ENCODE measurements at regions of chr10 and their contacts with region 1.

Region 1: DNA sequence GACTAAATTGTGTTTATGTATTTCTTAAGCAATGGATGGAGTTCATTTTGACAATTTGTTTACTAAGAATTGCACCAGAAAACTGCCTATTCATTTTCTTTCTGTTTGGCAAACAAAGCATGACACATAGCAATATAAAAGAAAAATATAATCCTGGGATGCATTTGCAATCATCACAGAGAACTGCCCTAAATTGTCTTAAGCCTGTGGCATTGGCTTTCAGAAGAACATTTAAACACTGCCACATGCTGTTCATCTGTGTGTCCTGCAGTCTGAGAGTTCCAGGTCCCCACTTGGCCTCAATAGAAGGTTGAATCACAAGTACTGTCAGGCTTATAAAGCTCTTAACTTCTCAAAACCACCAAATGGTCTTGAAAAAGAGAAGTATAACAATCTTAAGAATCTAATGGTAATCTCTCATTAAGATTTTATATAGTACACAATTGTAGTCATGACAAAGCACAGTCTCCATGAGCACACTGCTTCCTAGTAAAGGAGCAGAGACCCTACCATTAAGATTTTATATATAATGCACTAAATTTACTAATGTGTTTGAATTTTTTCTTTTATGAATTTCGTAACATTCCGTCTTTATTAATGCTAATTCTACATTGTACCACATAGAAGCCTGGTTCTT is 29.9 kb downstream of the RNLS start:
- DNase-seq: peak; percentile 14
- H3K4me3 Mint-ChIP-seq: no peak overlapping the region
- H3K27ac Mint-ChIP-seq: no peak overlapping the region
- H3K4me1 Mint-ChIP-seq: peaks cover 6% of the 10 kb centered on the region
- H3K27me3 Mint-ChIP-seq: peaks cover 3% of the 10 kb centered on the region

Region 2: GRCh38 chr10:87659571-87660483 is 893.4 kb before region 1 on chr10 and contains the start of gene PAPSS2:
- intact Hi-C with region 1: loop called (anchors 1 kb)
- DNase-seq: no peak
- H3K4me3 Mint-ChIP-seq: peak within 1 kb of the TSS; percentile 81
- H3K27ac Mint-ChIP-seq: no peak within 1 kb of the TSS
- H3K4me1 Mint-ChIP-seq: peaks cover 17% of the 10 kb centered on the region
- H3K27me3 Mint-ChIP-seq: peaks cover 49% of the 10 kb centered on the region
- total RNA-seq, gene PAPSS2: 0.07 and 0.21 TPM in 2 replicates

Region 3: GRCh38 chr10:87817609-87818504 is 735.4 kb before region 1 on chr10 and contains the start of gene ATAD1:
- intact Hi-C with region 1: loop called (anchors 1 kb)
- DNase-seq: peak; percentile 88
- H3K4me3 Mint-ChIP-seq: peak within 1 kb of the TSS; percentile 93
- H3K27ac Mint-ChIP-seq: peak within 1 kb of the TSS; percentile 98
- H3K4me1 Mint-ChIP-seq: peaks cover 40% of the 10 kb centered on the region
- H3K27me3 Mint-ChIP-seq: peaks cover 4% of the 10 kb centered on the region
- total RNA-seq, gene ATAD1: 50.1 and 53.0 TPM in 2 replicates

Region 4: GRCh38 chr10:87850742-87851205 is 702.5 kb before region 1 on chr10:
- intact Hi-C with region 1: loop called (anchors 1 kb)
- DNase-seq: peak; percentile 40
- H3K4me3 Mint-ChIP-seq: no peak overlapping the region
- H3K27ac Mint-ChIP-seq: no peak overlapping the region
- H3K4me1 Mint-ChIP-seq: peaks cover 15% of the 10 kb centered on the region
- H3K27me3 Mint-ChIP-seq: no peaks in the 10 kb centered on the region

Region 5: GRCh38 chr10:87961046-87961713 is 592.1 kb before region 1 on chr10:
- intact Hi-C with region 1: loop called (anchors 5 kb)
- DNase-seq: no peak
- H3K4me3 Mint-ChIP-seq: no peak overlapping the region
- H3K27ac Mint-ChIP-seq: no peak overlapping the region
- H3K4me1 Mint-ChIP-seq: peaks cover 5% of the 10 kb centered on the region
- H3K27me3 Mint-ChIP-seq: no peaks in the 10 kb centered on the region

Region 6: GRCh38 chr10:88386821-88387773 is 166.1 kb before region 1 on chr10:
- intact Hi-C with region 1: loop called (anchors 2 kb)
- DNase-seq: no peak
- H3K4me3 Mint-ChIP-seq: no peak overlapping the region
- H3K27ac Mint-ChIP-seq: no peak overlapping the region
- H3K4me1 Mint-ChIP-seq: peaks cover 16% of the 10 kb centered on the region
- H3K27me3 Mint-ChIP-seq: no peaks in the 10 kb centered on the region

Region 7: DNA sequence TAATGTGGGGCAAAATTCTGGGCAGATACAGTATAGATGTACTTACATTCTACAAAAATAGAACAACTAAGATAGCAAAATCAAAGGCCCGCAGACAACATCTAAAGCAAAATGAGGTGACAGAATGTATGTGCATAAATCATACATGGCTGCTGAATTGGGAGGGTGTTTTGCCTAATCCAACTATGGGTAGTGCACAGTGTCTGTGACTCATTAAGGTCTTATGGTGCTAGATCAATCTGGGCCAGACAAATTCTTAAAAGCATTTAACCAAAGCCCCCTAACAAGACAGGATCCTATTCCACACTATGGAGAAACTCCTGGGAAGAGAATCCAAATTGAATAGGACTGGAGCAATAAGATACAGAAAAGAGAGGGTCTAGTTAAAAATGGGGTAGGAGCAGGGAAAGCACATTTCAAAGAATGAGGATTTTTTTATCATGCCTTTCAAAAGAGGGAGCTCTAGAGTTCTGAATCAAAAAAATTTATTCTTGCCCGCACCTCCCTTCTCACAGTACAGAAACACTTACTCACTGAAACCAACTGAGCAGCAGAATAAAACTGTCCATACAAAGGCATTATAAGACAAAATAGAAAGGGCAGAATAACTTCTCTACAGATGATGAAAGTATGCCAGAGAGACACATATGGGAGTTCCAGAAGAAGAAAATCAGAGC is 151.4 kb before region 1 on chr10:
- intact Hi-C with region 1: loop called (anchors 1 kb)
- DNase-seq: no peak
- H3K4me3 Mint-ChIP-seq: no peak overlapping the region
- H3K27ac Mint-ChIP-seq: no peak overlapping the region
- H3K4me1 Mint-ChIP-seq: peaks cover 7% of the 10 kb centered on the region
- H3K27me3 Mint-ChIP-seq: peaks cover 2% of the 10 kb centered on the region

Region 8: GRCh38 chr10:88865281-88865876 is 312.1 kb after region 1 on chr10:
- intact Hi-C with region 1: no loop called
- DNase-seq: no peak
- H3K4me3 Mint-ChIP-seq: no peak overlapping the region
- H3K27ac Mint-ChIP-seq: no peak overlapping the region
- H3K4me1 Mint-ChIP-seq: no peaks in the 10 kb centered on the region
- H3K27me3 Mint-ChIP-seq: peaks cover 20% of the 10 kb centered on the region

Measured in activated T-helper 1 cell treated with anti-CD3 and anti-CD28 coated beads, Interleukin-12 subunit alpha, Interleukin-12 subunit beta, Interleukin-2, Interleukin-4 antibody, amounts not matched to agents 30 ng/mL and 10 ng/mL and 1 ng/mL, durations not matched to agents 14 hours and 24 hours and 36 hours (primary cell).